Right cardiac atrium (tissue), 5 donors: ENCODE measurements at regions of chr16 and their contacts with region 1.

Region 1: DNA sequence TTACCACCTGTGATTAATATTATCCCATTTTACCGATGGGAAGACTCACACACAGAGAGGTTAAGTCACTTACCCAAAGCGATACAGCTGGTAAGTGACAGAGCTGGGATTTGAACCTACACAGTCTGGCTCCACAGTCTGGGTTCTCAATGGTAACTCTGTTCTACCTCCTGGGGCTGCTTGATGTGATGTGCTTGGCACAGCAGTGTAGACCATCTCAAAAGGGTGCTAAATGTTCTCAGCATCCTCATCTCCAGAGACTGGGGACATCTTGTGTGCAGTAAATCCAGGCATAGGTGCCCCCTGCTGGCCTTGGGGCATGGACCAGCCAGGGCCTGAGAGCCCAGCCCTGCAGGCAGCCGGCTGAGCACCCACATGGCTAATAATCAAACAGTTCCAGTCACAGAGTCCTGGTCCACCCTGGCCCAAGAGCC is 15.4 kb upstream of the KATNB1 start:
- DNase-seq: peak in 2 of 3 donors; percentile 55 to 72
- ATAC-seq: peak; percentile 47 to 75
- H3K4me3 ChIP-seq: no peak overlapping the region
- H3K27ac ChIP-seq: no peak overlapping the region
- H3K4me1 ChIP-seq: no peaks in the 10 kb centered on the region
- H3K27me3 ChIP-seq: no peaks in the 10 kb centered on the region

Region 2: GRCh38 chr16:57260294-57260929 is 459.7 kb before region 1 on chr16:
- intact Hi-C with region 1: no loop called
- DNase-seq: no peak
- ATAC-seq: peak in 1 of 2 donors; percentile 76
- H3K4me3 ChIP-seq: no peak overlapping the region
- H3K27ac ChIP-seq: peak overlapping the region; percentile 46
- H3K4me1 ChIP-seq: no peaks in the 10 kb centered on the region
- H3K27me3 ChIP-seq: no peaks in the 10 kb centered on the region

Region 3: GRCh38 chr16:57576429-57576870 is 143.7 kb before region 1 on chr16:
- intact Hi-C with region 1: loop called in 1 of 4 experiments (anchors 5 kb)
- DNase-seq: peak; percentile 69 to 91 (median 89)
- ATAC-seq: peak; percentile 34 to 74
- H3K4me3 ChIP-seq: no peak overlapping the region
- H3K27ac ChIP-seq: no peak overlapping the region
- H3K4me1 ChIP-seq: no peaks in the 10 kb centered on the region
- H3K27me3 ChIP-seq: no peaks in the 10 kb centered on the region

Region 4: DNA sequence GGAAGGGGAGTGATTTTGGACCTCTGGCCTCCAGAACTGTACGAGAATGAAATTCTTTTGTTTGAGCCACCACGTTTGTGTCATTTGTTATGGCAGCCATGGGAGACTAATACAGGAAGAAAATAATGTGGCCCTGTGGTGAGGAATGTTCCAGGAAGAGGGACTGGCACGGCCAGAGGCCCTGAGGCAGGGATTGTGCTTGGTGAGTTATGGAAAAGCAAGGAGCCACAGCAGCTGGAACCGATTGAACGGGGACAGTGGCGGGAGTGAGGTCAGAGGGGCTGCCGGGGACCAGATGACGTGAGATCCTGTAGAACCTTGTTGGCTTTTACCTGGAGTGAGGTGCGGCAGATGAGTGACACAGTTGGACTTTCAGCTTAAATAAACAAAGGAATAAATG is 357.7 kb after region 1 on chr16:
- intact Hi-C with region 1: no loop called
- DNase-seq: no peak
- ATAC-seq: no peak
- H3K4me3 ChIP-seq: no peak overlapping the region
- H3K27ac ChIP-seq: no peak overlapping the region
- H3K4me1 ChIP-seq: peaks cover 2% of the 10 kb centered on the region
- H3K27me3 ChIP-seq: no peaks in the 10 kb centered on the region